Head of caudate nucleus (tissue), 42 donors: ENCODE measurements at regions of chr9 and their contacts with region 1.

Region 1: DNA sequence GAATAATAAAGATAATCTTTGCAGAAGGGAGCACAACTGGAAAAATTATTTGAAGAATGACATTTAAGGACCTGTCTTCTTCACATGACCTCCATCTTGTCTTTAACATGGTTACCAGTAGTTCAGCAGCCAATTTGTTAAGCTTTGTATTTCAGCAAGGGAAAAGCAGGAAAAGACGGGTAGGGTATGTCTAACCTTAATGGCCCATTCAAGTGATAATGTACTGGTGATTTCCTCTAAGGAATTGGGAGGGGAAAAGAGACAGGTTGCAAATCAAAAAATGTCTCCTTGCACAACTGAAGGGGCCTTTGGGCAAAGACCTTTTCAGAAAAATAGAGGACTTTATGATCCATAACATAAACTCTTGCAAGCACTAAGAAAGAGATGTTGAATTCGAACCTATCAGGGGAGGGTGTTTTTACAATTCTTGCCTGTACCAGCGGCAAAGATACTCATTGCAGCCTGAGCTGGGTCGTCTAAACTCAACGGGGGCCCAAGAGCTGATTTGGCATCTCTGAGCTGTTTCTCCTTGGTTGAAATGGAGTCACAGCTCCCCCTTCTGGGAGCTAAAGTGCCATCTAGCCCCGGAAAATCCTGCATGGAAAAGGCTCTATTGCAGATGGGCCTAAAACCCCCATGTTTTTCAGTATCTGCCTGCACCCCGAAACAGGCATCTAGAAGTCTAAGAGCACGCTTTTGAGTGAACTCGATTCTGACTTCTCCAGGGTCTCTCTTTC is 3.8 kb downstream of the BRINP1 start:
- DNase-seq: peak; percentile 24 to 88 (median 69)

Region 2: DNA sequence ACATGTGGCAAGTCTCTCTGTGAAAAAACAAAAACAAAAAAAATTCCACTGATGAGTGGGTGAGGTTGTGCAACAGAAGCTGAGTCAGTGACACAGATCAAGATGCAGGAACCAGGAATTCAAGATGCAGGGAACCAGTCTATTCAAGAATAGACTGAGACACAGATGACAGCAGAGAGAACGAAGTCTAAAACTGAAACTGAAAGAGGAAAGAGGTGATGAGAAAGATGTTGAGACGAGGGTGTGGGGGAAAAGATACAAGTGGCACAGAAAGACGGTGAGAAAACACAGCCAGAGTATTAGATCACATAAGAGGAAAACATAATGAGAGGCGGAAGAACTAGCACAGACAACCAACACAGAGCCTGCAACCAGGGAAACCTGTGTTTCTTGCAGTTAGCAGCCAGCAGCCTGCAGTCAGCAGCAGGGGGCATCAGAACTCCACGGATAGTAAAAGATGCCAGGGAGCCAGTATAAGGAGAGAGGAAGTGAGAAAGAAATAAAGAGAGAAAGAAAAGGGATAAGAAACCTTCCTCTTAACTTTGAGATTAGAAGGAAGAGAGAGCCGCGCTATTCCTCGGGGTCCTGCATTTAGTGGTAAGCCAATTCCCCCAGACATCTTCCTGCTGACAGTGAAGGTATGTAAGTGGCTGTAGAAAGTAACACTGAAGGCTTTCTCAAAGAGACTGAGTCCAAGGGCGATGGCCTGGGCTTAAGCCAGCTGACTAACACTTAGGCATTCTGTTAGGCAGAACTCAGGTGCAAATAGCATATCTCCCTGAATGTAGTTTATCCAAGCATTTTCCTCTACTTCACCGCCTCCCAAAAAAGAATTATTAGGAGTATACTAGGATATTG is 1582.3 kb before region 1 on chr9:
- intact Hi-C with region 1: loop called (anchors 10 kb)
- DNase-seq: peak; percentile 75 to 95 (median 88)

Region 3: DNA sequence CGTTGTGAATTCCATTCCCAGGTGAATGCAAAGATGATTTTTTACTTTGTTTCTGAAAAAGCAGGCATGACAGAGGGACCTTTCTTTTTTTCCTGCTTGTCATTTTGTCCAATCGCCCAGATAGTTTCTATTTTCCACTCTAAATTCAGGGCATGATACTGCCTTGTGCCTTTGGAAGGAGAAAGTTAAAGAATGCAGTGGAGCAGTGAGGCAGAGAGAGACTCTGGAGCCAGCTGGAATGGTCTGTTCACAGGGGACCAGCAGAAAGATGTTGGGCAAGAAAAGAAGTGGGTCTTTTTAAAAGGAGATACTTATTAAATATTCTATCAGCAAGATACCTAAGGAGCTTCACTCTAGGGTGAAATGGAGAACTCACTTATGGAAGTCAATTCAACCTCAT is 528.6 kb before region 1 on chr9:
- intact Hi-C with region 1: loop called (anchors 10 kb)
- DNase-seq: peak in 4 of 42 donors; percentile 5 to 37 (median 10)

Region 4: GRCh38 chr9:119289740-119290433 is 75.6 kb before region 1 on chr9:
- intact Hi-C with region 1: loop called (anchors 10 kb)
- DNase-seq: peak in 28 of 42 donors; percentile 17 to 85 (median 54)

Region 5: GRCh38 chr9:119662329-119662728 is 296.9 kb after region 1 on chr9:
- intact Hi-C with region 1: no loop called
- DNase-seq: no peak

Region 6: DNA sequence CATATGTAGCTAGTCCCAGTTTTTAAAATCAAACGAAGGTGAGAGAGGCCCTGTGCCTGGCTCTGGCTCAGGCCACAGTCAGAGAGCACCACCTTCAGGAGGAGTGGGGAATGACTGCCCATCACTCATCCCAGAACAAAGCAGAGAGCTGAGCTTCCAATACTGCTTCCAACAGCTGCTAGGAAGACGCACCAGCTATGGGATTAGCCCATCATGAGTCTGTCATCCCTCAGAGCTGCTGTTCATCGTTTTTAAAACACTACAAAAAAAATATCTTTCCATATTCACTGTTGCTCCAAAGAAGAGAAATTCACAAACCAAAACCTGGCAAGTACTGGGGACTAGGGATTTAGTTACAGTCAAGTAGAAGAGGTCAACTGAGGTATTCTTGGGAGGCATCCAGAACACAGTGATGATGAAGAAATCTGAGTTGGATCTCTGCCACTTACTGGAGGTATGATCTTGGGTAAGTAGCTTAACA is 1112.1 kb after region 1 on chr9:
- intact Hi-C with region 1: loop called (anchors 5 kb)
- DNase-seq: peak; percentile 44 to 88 (median 73)